ENCODE measurements at regions of chr12 and their contacts with region 1.

Region 1: GRCh38 chr12:76790564-76791552 is 26.9 kb downstream of the ZDHHC17 start:
- DNase-seq: peak; percentile 35
- CTCF ChIP-seq: peak; percentile 32

Region 2: DNA sequence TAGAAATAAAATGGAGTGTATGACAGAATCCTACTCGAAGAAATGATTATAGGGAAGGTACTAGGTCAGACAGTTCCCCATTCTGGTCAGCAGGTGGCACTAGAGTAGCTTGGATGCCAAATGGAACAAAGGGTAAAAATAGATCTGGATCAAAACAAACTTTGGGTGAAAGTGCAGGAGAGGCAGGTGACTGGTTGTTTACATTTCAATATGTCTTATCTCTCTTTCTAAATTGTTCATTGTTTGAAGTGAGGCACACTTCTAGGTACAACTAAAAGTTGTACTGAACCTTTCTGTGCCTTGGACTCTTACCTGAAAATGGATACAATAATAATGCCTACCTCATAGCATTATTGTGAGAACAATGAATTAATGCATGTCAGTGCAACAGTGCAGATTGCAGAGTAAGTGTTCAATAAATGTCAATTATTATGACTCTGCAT is 169.3 kb before region 1 on chr12:
- CTCF ChIA-PET with region 1: interaction called, 51 read pairs
- POLR2A ChIA-PET with region 1: no interaction called
- DNase-seq: peak; percentile 63
- CTCF ChIP-seq: peak; percentile 87

Region 3: GRCh38 chr12:76763743-76764675 is 26.8 kb before region 1 on chr12 and contains the start of gene ZDHHC17:
- CTCF ChIA-PET with region 1: interaction called, 16 read pairs
- POLR2A ChIA-PET with region 1: no interaction called
- DNase-seq: peak; percentile 91
- CTCF ChIP-seq: no peak

Region 4: GRCh38 chr12:76777765-76778216 is 13.1 kb before region 1 on chr12:
- CTCF ChIA-PET with region 1: interaction called, 33 read pairs
- POLR2A ChIA-PET with region 1: no interaction called
- DNase-seq: peak; percentile 51
- CTCF ChIP-seq: no peak

Region 5: GRCh38 chr12:76804435-76804976 is 13.6 kb after region 1 on chr12:
- CTCF ChIA-PET with region 1: interaction called, 15 read pairs
- POLR2A ChIA-PET with region 1: no interaction called
- DNase-seq: no peak
- CTCF ChIP-seq: no peak

Region 6: DNA sequence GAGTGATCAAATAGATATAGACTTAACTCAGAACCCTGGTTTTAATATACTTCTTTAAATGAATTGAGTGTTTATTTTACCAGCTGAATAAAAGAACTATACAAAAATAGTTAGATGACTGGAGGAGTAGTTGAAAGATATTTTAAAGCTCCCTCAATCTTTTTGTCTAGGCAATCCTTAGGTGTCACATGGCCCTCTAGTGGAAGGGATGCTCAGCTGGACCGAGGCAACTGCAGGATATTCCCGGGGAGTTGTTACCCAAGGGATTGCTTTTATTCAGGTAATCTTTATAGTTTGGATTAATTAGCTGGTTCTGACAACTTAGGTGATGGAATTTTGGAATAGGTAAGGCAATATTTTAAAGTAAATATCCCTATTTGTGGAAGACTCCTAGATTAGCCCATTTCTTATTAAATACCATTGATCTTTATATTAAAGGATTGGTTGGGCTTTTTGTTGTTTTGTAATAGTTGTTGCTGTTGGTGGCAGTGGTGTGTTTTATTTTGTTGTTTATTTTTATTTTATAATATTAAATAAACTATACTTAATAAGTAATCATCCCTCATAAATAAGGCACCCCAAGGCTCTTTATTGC is 30.1 kb after region 1 on chr12:
- CTCF ChIA-PET with region 1: interaction called, 17 read pairs
- POLR2A ChIA-PET with region 1: no interaction called
- DNase-seq: no peak
- CTCF ChIP-seq: peak; percentile 16

Region 7: GRCh38 chr12:77514511-77514910 is 723.7 kb after region 1 on chr12:
- CTCF ChIA-PET with region 1: no interaction called
- POLR2A ChIA-PET with region 1: no interaction called
- DNase-seq: no peak
- CTCF ChIP-seq: no peak

Measured in GM10248 (cell line).